ENCODE measurements at regions of chr9 and their contacts with region 1.

Region 1: DNA sequence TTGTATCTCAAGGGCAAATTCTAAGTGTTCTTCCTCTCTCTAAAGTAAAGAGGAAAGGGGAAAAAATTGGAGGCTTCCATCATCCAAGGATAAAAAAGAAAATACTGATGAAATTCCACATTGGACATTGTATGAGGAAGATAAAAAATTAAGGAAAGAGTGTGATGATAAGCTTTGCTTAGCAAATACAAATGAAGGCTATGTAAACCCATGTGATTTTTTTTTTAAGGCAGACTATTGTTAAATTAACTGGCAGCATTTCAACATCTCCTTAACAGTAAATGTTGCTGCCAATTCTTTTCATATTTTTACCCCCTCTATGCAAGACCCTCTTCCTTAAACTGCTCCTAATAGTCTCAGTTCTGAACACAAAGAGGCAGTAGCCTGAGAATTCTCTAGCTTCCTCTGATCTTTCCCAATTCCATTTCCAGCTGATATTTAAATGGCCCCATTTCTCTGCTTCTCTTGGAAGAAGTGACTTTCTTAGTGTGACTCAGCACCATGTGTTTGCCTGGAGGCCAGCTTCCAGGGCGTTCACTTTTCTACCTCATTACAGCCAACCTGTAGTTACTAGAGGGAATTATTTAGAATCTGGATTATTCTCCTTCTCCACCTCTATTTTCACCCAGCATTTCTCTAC is 159.7 kb downstream of the TLE1 start:
- DNase-seq: peak; percentile 84
- H3K4me3 Mint-ChIP-seq: no peak overlapping the region
- H3K27ac Mint-ChIP-seq: peak overlapping the region; percentile 53
- H3K4me1 Mint-ChIP-seq: peaks cover 26% of the 10 kb centered on the region
- H3K27me3 Mint-ChIP-seq: no peaks in the 10 kb centered on the region
- CTCF ChIP-seq: no peak

Region 2: DNA sequence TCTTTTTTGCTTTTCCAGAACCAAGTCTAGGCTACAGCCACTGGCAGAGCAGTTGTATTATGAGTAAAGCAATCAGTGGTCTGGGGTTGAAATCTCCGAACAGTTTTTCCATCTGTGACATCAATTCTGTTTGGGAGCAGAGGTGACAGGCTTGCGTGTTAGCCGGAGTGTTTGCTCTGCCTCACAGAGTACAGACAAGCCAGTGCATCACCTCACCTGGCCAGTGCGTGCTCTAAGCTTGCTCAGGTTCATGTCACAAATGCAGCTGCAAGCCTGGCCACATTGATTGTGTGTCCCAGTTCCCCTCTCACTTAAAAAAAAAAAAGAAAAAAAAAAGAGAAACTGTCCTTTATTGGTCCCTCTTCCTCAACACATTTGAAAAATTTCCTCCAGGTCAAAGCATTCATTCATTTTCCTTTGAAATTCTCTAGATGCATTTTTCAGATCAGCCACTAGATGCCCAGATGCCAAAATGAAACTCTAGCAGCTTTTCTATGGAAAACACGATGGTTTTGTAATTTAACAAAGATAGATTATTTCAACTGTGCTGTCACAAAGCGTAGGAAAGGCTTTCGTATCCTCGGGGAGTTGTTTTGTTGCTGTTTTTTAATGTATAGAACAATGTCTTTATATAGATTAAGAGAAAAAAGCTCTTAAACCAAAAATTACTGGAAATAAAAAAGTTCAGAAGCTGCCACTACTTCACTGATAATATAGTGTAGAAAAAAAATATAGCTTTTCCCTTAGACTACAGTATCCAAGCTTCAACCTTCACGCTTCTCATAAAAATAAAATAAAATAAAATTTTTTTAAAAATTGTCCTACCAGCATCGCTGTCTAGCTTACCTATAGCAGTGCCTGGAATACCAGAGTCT is 425.8 kb before region 1 on chr9:
- CTCF ChIA-PET with region 1: no interaction called
- POLR2A ChIA-PET with region 1: no interaction called
- intact Hi-C with region 1: loop called (anchors 10 kb)
- DNase-seq: peak; percentile 22
- H3K4me3 Mint-ChIP-seq: no peak overlapping the region
- H3K27ac Mint-ChIP-seq: no peak overlapping the region
- H3K4me1 Mint-ChIP-seq: peaks cover 7% of the 10 kb centered on the region
- H3K27me3 Mint-ChIP-seq: no peaks in the 10 kb centered on the region
- CTCF ChIP-seq: peak; percentile 34

Region 3: GRCh38 chr9:82271106-82271561 is 741.5 kb after region 1 on chr9:
- CTCF ChIA-PET with region 1: no interaction called
- POLR2A ChIA-PET with region 1: no interaction called
- intact Hi-C with region 1: no loop called
- DNase-seq: no peak
- H3K4me3 Mint-ChIP-seq: no peak overlapping the region
- H3K27ac Mint-ChIP-seq: no peak overlapping the region
- H3K4me1 Mint-ChIP-seq: peaks cover 6% of the 10 kb centered on the region
- H3K27me3 Mint-ChIP-seq: no peaks in the 10 kb centered on the region
- CTCF ChIP-seq: no peak